CD4-positive, alpha-beta T cell (primary cell): ENCODE measurements at regions of chr3 and their contacts with region 1.

Region 1: DNA sequence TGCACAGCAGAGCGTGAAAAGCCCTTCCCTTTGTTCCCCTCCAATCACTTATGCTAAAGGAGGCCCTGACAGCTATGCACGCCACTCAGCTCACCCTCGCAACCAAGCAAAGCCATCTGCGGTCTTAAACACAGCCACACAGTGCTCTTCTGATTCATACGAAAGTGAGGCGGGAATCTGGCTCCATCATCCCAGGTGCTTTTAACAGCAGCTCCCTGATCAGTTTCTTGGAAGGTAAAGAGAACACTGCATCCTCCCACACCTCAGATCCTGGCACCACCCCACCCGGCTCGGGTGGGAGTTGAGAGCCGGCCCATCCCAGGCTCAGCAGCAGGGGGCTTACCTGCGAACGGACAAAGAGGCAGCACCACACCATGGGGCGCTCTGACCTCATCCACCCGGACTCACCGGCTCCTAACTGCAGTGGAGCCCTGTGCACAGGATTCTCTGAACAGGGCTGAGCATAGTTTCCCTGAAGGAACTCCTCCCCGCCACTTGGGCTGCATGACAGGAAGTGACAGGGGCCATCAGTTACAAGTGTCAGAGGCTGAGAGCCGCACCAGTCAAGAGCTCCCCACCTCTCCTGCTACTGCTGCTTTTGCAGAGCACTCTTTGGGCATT is 114.3 kb upstream of the ARHGEF3 start:
- DNase-seq: peak; percentile 53 to 86 (median 70)
- ATAC-seq: peak; percentile 94
- H3K4me3 ChIP-seq: peak overlapping the region; percentile 63
- H3K4me3 Mint-ChIP-seq: peak overlapping the region; percentile 92
- H3K27ac ChIP-seq: peak overlapping the region; percentile 69 to 75
- H3K27ac Mint-ChIP-seq: peak overlapping the region; percentile 94
- H3K4me1 ChIP-seq: peaks cover 49% of the 10 kb centered on the region
- H3K4me1 Mint-ChIP-seq: peaks cover 88% of the 10 kb centered on the region
- H3K27me3 ChIP-seq: no peaks in the 10 kb centered on the region
- H3K27me3 Mint-ChIP-seq: no peaks in the 10 kb centered on the region
- CTCF ChIP-seq: no peak

Region 2: DNA sequence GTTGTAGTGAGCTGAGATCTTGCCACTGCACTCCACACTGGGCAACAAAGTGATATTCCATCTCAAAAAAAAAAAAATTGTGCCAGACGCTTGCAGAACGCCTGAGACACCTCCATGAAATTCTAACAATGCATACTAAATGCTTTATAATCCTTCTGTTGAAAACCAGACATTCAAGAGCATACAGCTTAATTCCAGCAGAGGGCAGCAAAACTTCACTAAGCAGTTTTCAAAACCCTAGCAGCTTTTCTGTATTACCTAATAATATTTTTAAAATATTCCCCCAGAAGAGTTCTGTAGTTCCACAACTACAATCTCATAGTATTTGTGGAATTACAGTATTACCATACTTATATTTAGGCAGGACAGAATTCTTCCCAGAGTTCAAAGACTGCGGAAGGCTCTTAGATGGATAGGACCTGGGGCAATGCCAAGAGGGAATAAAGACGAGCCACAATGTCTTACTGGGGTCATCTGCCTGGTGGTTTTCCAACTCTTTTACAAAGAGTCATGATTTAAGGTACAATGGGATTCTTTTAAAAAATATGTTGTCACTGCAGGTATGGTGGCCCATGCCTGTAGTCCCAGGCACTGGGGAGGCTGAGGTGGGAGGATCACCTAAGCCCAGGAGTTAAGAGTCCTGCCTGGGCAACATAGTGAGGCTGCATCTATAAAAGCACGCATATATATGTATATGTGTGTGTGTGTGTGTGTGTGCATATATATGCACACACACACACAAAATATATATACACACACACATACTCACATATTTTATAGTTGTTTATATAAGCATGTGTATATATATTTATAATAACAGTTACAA is 213.4 kb before region 1 on chr3:
- CTCF ChIA-PET with region 1: interaction called, 4 read pairs
- POLR2A ChIA-PET with region 1: interaction called, 4 read pairs
- intact Hi-C with region 1: loop called (anchors 5 kb)
- DNase-seq: peak in 11 of 14 experiments; percentile 14 to 86 (median 40)
- ATAC-seq: peak; percentile 77
- H3K4me3 ChIP-seq: no peak overlapping the region
- H3K4me3 Mint-ChIP-seq: no peak overlapping the region
- H3K27ac ChIP-seq: no peak overlapping the region
- H3K27ac Mint-ChIP-seq: no peak overlapping the region
- H3K4me1 ChIP-seq: peaks cover 12% of the 10 kb centered on the region
- H3K4me1 Mint-ChIP-seq: peaks cover 29% of the 10 kb centered on the region
- H3K27me3 ChIP-seq: no peaks in the 10 kb centered on the region
- H3K27me3 Mint-ChIP-seq: no peaks in the 10 kb centered on the region
- CTCF ChIP-seq: peak; percentile 84

Region 3: DNA sequence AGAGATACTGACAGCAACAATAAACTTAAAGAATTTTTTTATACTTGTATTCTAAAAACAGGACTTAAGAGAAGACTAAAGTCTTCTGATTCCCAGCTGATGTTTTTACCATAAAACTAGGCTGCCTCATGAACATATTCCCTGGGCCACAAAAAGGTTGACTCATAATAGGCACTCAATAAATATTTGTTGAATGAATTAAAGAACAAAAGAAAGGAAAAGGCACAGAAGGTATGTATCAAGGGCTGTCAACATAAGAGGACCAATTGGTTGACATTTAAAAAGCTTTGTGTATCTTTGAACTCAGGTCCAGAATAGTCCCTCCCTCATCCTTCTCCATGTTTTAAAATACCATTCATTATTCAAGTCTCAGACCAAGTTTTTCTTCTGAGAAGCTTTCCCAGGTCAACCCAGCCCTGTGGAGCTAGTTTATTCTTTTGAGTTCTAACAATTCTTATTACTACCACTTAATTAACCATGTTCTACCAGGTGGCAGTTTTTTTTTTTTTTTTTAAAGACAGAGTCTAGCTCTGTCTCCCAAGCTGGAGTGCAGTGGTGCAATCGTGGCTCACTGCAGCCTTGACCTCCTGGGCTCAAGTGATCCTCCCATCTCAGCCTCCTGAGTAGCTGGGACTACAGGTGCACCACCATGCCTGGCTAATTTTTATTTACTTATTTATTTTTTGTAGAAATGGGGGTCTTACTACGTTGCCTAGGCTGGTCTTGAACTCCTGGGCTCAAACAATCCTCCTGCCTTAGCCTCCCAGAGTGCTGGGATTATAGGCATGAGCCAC is 96.9 kb before region 1 on chr3:
- CTCF ChIA-PET with region 1: interaction called, 7 read pairs
- POLR2A ChIA-PET with region 1: interaction called, 4 read pairs
- intact Hi-C with region 1: loop called in 1 of 2 experiments (anchors 5 kb)
- DNase-seq: no peak
- ATAC-seq: no peak
- H3K4me3 ChIP-seq: no peak overlapping the region
- H3K4me3 Mint-ChIP-seq: no peak overlapping the region
- H3K27ac ChIP-seq: no peak overlapping the region
- H3K27ac Mint-ChIP-seq: peak overlapping the region; percentile 74
- H3K4me1 ChIP-seq: peaks cover 21% of the 10 kb centered on the region
- H3K4me1 Mint-ChIP-seq: peaks cover 78% of the 10 kb centered on the region
- H3K27me3 ChIP-seq: no peaks in the 10 kb centered on the region
- H3K27me3 Mint-ChIP-seq: no peaks in the 10 kb centered on the region
- CTCF ChIP-seq: no peak

Region 4: DNA sequence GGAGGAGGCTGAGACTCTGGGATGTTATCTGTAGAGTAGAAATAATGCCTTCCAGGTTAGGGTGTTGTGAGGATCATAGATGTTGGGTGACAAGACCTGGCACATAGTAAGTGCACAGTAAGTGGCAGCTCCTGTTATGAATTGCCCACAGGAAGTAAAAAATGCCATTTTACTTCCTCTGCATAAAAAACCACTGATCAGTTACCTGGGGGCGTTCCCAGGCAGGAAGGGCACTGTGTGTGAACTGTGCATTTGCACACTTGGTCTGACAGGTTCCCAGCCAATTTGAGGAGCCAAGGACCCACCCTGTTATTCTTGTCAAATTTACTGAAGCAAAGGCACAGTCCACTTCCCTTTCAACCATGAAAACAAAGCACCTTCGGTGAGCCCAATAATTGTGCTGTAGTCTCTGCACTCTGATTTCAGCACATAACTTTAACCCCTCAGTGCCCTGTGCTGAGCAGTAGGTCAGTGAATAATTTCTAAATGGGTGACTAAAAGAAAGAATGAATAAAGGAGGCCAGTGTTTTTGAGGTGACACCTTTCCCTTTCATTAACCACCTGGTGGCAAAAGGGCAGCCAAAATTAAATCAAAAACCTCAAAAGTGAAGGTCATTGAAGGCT is 28.6 kb before region 1 on chr3:
- CTCF ChIA-PET with region 1: interaction called, 5 read pairs
- POLR2A ChIA-PET with region 1: interaction called, 11 read pairs
- intact Hi-C with region 1: loop called in 1 of 2 experiments (anchors 2 kb)
- DNase-seq: peak in 9 of 14 experiments; percentile 10 to 69 (median 27)
- ATAC-seq: peak; percentile 49
- H3K4me3 ChIP-seq: peak overlapping the region; percentile 8
- H3K4me3 Mint-ChIP-seq: peak overlapping the region; percentile 64
- H3K27ac ChIP-seq: peak overlapping the region in 1 of 2 donors; percentile 51
- H3K27ac Mint-ChIP-seq: peak overlapping the region; percentile 83
- H3K4me1 ChIP-seq: peaks cover 75% of the 10 kb centered on the region
- H3K4me1 Mint-ChIP-seq: peaks cover 85% of the 10 kb centered on the region
- H3K27me3 ChIP-seq: no peaks in the 10 kb centered on the region
- H3K27me3 Mint-ChIP-seq: no peaks in the 10 kb centered on the region
- CTCF ChIP-seq: no peak

Region 5: GRCh38 chr3:56988458-56989168 is 72.5 kb after region 1 on chr3:
- CTCF ChIA-PET with region 1: interaction called, 17 read pairs
- POLR2A ChIA-PET with region 1: interaction called, 5 read pairs
- intact Hi-C with region 1: loop called in 1 of 2 experiments (anchors 5 kb)
- DNase-seq: peak; percentile 47 to 88 (median 62)
- ATAC-seq: peak; percentile 67
- H3K4me3 ChIP-seq: no peak overlapping the region
- H3K4me3 Mint-ChIP-seq: peak overlapping the region; percentile 27
- H3K27ac ChIP-seq: no peak overlapping the region
- H3K27ac Mint-ChIP-seq: no peak overlapping the region
- H3K4me1 ChIP-seq: peaks cover 17% of the 10 kb centered on the region
- H3K4me1 Mint-ChIP-seq: peaks cover 20% of the 10 kb centered on the region
- H3K27me3 ChIP-seq: no peaks in the 10 kb centered on the region
- H3K27me3 Mint-ChIP-seq: peaks cover 8% of the 10 kb centered on the region
- CTCF ChIP-seq: peak; percentile 99

Region 6: DNA sequence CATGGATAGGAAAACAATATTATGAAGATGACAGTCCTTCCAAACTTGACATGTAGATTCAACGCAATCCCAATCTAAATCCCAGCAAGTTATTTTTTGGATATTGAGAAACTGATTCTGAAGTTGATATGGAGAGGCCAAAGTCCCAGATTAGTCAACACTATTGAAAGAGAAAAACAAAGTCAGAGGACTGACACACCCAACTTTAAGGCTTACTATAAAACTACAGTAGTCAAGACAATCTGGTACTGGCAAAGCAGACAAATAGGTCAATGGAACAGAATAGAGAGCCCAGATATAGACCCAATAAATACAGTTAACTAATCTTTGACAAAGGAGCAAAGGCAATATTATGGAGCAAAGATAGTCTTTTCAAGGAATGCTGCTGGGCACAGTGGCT is 495.6 kb after region 1 on chr3:
- CTCF ChIA-PET with region 1: no interaction called
- POLR2A ChIA-PET with region 1: no interaction called
- intact Hi-C with region 1: no loop called
- DNase-seq: no peak
- ATAC-seq: no peak
- H3K4me3 ChIP-seq: no peak overlapping the region
- H3K4me3 Mint-ChIP-seq: no peak overlapping the region
- H3K27ac ChIP-seq: no peak overlapping the region
- H3K27ac Mint-ChIP-seq: no peak overlapping the region
- H3K4me1 ChIP-seq: no peaks in the 10 kb centered on the region
- H3K4me1 Mint-ChIP-seq: no peaks in the 10 kb centered on the region
- H3K27me3 ChIP-seq: no peaks in the 10 kb centered on the region
- H3K27me3 Mint-ChIP-seq: peaks cover 8% of the 10 kb centered on the region
- CTCF ChIP-seq: no peak